Posterior cingulate gyrus (tissue), 11 donors: ENCODE measurements at regions of chr1 and their contacts with region 1.

Region 1: GRCh38 chr1:178532392-178532791 is 19.5 kb downstream of the TEX35 start:
- DNase-seq: peak; percentile 71 to 98 (median 88)

Region 2: DNA sequence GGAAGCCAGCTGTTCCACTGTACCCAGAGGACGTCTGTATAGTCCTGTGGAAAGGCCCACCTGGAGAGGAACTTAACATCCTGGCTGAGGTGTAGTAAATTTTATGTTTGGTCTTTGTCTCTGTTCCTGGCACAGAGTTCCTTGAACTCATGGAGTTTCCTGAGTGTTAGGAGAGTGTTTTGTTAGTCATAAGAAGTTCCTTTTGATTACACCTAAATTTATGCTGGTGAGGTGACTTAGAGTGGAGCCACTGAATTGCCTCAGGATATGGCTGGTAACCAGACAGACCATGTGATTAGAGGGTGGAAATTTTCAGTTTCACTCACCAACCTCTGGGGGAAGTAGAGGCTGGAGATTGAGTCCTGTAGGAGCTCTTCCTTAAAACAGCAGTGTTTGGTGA is 380.6 kb before region 1 on chr1:
- intact Hi-C with region 1: no loop called
- DNase-seq: no peak

Region 3: GRCh38 chr1:178749581-178750166 is 217.3 kb after region 1 on chr1:
- intact Hi-C with region 1: loop called (anchors 1 kb)
- DNase-seq: no peak